ENCODE measurements at regions of chr15 and their contacts with region 1.

Region 1: DNA sequence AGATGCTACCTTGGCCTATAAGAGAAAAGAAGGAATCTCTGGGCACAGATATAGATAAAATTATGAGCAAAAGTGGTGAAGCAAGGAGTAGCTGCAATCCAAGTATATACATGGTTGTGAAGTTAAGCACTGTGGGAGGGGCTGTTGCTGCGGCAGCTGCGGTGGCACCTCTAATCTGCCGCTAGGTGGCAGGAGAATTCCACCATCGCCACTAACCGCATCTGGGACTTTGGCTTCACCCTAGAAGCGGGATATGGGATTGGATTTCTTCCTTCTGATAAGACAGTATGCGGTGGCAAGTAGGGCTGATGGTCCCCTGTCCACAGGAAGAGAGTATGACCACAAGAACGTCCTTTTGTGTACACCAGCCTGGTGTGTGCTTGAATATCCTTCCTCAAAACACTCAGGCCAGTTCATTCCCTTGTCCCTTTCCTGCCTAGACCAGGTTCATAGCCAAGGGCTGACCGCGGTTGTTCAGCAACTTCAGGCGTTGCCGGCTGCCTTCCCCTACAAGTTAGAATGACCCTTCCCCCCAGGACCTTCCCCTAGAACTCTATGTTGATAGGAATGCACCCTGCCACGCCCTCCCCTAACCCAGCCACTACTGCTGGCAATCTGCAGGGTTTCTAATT is 5.1 kb downstream of the MAGEL2 start:
- DNase-seq: peak; percentile 45 to 64
- ATAC-seq: peak in 3 of 4 donors; percentile 65 to 85 (median 76)
- H3K4me3 ChIP-seq: no peak overlapping the region
- H3K27ac ChIP-seq: no peak overlapping the region
- H3K4me1 ChIP-seq: no peaks in the 10 kb centered on the region
- H3K27me3 ChIP-seq: no peaks in the 10 kb centered on the region
- CTCF ChIP-seq: peak; percentile 71

Region 2: GRCh38 chr15:23518104-23518503 is 124.4 kb before region 1 on chr15:
- intact Hi-C with region 1: no loop called
- DNase-seq: no peak
- ATAC-seq: no peak
- H3K4me3 ChIP-seq: no peak overlapping the region
- H3K27ac ChIP-seq: no peak overlapping the region
- H3K4me1 ChIP-seq: no peaks in the 10 kb centered on the region
- H3K27me3 ChIP-seq: no peaks in the 10 kb centered on the region
- CTCF ChIP-seq: no peak

Region 3: DNA sequence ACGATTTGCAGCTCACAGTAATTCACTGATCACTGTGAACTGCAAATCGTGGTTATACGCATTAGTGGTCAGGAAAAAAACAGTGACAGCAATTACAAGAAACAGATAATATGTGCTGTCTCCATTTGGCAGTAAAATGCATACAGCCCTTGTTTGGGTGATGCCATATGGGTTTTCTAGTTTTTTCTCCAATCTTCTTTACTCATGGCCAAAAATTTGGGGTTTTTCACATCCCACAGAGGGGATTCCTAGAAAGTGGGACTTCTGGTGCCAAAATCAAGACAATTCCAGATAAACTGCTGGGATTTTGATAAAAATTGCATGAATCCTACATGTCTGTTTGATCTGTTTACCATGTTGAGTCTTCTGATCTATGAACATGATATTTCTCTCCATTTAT is 29.0 kb after region 1 on chr15:
- intact Hi-C with region 1: no loop called
- DNase-seq: no peak
- ATAC-seq: no peak
- H3K4me3 ChIP-seq: no peak overlapping the region
- H3K27ac ChIP-seq: no peak overlapping the region
- H3K4me1 ChIP-seq: no peaks in the 10 kb centered on the region
- H3K27me3 ChIP-seq: no peaks in the 10 kb centered on the region
- CTCF ChIP-seq: no peak

Region 4: GRCh38 chr15:23857028-23857641 is 214.6 kb after region 1 on chr15:
- intact Hi-C with region 1: loop called in 1 of 2 experiments (anchors 2 kb)
- DNase-seq: peak in 1 of 2 donors; percentile 16
- ATAC-seq: no peak
- H3K4me3 ChIP-seq: no peak overlapping the region
- H3K27ac ChIP-seq: no peak overlapping the region
- H3K4me1 ChIP-seq: no peaks in the 10 kb centered on the region
- H3K27me3 ChIP-seq: no peaks in the 10 kb centered on the region
- CTCF ChIP-seq: peak; percentile 33

Region 5: GRCh38 chr15:23877502-23878412 is 235.2 kb after region 1 on chr15:
- intact Hi-C with region 1: loop called (anchors 5 kb)
- DNase-seq: peak; percentile 34 to 61
- ATAC-seq: peak in 3 of 4 donors; percentile 53 to 77 (median 75)
- H3K4me3 ChIP-seq: no peak overlapping the region
- H3K27ac ChIP-seq: no peak overlapping the region
- H3K4me1 ChIP-seq: no peaks in the 10 kb centered on the region
- H3K27me3 ChIP-seq: no peaks in the 10 kb centered on the region
- CTCF ChIP-seq: peak; percentile 55

Region 6: GRCh38 chr15:23897531-23897930 is 255.0 kb after region 1 on chr15:
- intact Hi-C with region 1: no loop called
- DNase-seq: no peak
- ATAC-seq: no peak
- H3K4me3 ChIP-seq: no peak overlapping the region
- H3K27ac ChIP-seq: no peak overlapping the region
- H3K4me1 ChIP-seq: no peaks in the 10 kb centered on the region
- H3K27me3 ChIP-seq: no peaks in the 10 kb centered on the region
- CTCF ChIP-seq: no peak

Region 7: DNA sequence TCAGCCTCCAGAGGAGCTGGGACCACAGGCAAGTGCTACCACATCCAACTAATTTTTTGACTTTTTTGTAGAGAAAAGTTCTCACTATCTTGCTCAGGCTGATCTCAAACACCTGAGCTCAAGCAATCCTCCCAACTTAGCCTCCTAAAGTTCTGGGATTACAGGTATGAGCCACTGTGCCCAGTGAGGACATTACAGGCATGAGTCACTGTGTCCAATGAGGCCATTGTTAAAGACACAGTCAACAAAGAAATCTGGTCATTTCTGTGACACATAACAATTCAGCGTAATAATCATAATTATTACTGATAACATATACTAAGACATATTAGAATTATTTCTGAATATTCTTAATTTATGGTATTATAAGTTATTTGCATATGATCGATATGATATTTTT is 508.0 kb after region 1 on chr15:
- intact Hi-C with region 1: no loop called
- DNase-seq: no peak
- ATAC-seq: no peak
- H3K4me3 ChIP-seq: no peak overlapping the region
- H3K27ac ChIP-seq: no peak overlapping the region
- H3K4me1 ChIP-seq: no peaks in the 10 kb centered on the region
- H3K27me3 ChIP-seq: no peaks in the 10 kb centered on the region
- CTCF ChIP-seq: no peak

Measured in psoas muscle (tissue), 8 donors.